Ovary (tissue), 10 donors: ENCODE measurements at regions of chr14 and their contacts with region 1.

Region 1: GRCh38 chr14:51219473-51220448 is 20.3 kb upstream of the TMX1 start:
- DNase-seq: no peak
- H3K4me3 ChIP-seq: no peak overlapping the region
- H3K27ac ChIP-seq: no peak overlapping the region
- H3K4me1 ChIP-seq: no peaks in the 10 kb centered on the region
- H3K27me3 ChIP-seq: no peaks in the 10 kb centered on the region
- CTCF ChIP-seq: peak in 2 of 3 donors; percentile 44 to 52
- EP300 ChIP-seq: no peak
- POLR2A ChIP-seq: no peak

Region 2: DNA sequence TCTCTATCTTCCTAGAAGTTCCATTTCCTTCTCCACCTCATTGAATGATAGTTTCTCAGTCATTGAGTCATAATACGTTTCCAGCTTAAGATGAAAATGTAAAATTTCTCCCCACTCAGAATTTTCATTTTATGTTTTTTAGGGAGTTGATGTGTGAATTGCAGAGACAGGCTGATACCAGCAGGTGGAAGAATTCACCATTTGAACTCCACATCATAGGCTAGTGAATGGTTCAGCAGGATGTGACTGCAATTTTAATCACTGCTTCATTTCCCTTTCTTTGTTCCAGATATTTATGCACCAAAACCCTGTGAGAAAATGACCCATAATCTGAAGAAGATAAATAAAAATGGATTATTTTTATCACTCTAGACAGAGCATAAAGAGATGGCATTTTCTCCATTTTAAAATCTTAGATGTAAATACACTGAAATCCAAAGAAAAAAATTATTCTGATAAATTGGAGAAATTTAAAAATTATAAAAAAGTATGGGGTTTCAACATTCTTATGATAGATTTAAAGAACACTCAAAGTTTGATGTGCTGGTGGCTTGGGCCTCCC is 264.9 kb before region 1 on chr14:
- intact Hi-C with region 1: loop called in 3 of 4 experiments (anchors 5 to 10 kb)
- DNase-seq: no peak
- H3K4me3 ChIP-seq: no peak overlapping the region
- H3K27ac ChIP-seq: no peak overlapping the region
- H3K4me1 ChIP-seq: no peaks in the 10 kb centered on the region
- H3K27me3 ChIP-seq: no peaks in the 10 kb centered on the region
- CTCF ChIP-seq: peak in 2 of 3 donors; percentile 51 to 60
- EP300 ChIP-seq: no peak
- POLR2A ChIP-seq: no peak